Heart right ventricle (tissue), 16 donors: ENCODE measurements at regions of chr13 and their contacts with region 1.

Region 1: GRCh38 chr13:69226441-69226840 is 881.2 kb upstream of the ATXN8OS start:
- DNase-seq: no peak
- ATAC-seq: no peak
- H3K4me3 ChIP-seq: no peak overlapping the region
- H3K27ac ChIP-seq: no peak overlapping the region
- H3K4me1 ChIP-seq: no peaks in the 10 kb centered on the region
- H3K27me3 ChIP-seq: no peaks in the 10 kb centered on the region
- CTCF ChIP-seq: no peak

Region 2: DNA sequence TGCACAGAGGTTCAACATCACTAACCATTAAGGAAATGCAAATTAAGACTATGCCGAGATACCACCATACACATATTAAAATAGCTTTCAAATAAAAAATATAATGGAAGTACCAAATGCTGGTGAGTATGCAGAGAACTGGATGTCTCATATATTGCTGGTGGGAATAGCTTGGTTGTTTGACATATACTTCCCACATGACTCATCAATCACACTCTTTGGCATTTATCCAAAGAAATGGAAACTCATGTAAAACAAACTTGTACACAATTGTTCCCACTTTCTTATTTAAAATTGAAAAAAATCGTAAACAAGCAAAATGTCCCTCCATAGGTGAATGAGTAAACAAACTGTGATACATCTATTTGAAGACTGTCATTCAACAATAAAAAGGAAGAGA is 101.4 kb before region 1 on chr13:
- intact Hi-C with region 1: no loop called
- DNase-seq: no peak
- ATAC-seq: no peak
- H3K4me3 ChIP-seq: no peak overlapping the region
- H3K27ac ChIP-seq: no peak overlapping the region
- H3K4me1 ChIP-seq: no peaks in the 10 kb centered on the region
- H3K27me3 ChIP-seq: no peaks in the 10 kb centered on the region
- CTCF ChIP-seq: no peak

Region 3: DNA sequence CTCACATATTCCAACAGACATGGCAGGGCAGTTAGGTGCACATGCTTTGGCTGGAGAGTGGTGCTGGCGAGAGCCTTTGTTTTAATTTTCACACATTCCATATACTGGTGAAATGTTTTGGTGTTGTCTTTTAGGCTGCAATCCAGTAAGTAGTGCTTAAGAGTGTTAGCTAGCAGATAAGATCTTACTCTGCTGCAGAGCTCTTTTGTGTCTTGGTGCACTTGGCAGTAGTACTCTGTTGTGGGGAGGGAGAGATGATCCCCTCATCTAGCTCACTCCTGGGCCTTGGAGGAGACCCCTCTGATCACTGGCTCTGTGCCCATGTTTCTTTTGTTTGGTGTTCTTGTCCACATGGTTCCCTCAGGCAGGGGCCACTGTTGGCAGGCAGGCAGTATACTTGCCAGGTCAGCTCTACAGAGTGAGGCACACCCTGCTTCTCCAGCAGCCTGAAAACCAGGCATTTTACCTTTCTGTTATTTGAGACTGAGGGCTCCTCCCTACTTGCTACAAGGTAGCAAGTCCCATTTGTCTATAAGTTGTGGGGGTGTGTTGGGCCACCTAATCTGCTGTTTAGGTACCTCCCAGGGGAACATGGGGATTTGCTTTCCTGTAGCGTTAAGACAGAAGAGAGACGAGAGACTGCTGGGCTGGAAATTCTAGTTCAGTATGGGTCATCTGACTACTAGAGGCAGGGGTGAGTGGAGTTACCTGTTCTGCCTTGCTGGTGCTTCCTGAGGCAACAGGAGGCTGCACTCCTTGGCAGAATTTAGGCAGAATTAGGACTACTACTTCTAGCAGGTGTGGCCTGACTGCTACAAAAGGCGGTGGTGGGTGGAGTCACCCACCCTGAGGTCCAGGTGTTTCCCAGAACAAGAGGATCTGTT is 38.0 kb after region 1 on chr13:
- intact Hi-C with region 1: loop called in 1 of 10 experiments (anchors 2 kb)
- DNase-seq: no peak
- ATAC-seq: no peak
- H3K4me3 ChIP-seq: no peak overlapping the region
- H3K27ac ChIP-seq: no peak overlapping the region
- H3K4me1 ChIP-seq: no peaks in the 10 kb centered on the region
- H3K27me3 ChIP-seq: no peaks in the 10 kb centered on the region
- CTCF ChIP-seq: no peak